Activated CD4-positive, alpha-beta T cell treated with anti-CD3 and anti-CD28 coated beads for 36 hours (primary cell): ENCODE measurements at regions of chr22 and their contacts with region 1.

Region 1: DNA sequence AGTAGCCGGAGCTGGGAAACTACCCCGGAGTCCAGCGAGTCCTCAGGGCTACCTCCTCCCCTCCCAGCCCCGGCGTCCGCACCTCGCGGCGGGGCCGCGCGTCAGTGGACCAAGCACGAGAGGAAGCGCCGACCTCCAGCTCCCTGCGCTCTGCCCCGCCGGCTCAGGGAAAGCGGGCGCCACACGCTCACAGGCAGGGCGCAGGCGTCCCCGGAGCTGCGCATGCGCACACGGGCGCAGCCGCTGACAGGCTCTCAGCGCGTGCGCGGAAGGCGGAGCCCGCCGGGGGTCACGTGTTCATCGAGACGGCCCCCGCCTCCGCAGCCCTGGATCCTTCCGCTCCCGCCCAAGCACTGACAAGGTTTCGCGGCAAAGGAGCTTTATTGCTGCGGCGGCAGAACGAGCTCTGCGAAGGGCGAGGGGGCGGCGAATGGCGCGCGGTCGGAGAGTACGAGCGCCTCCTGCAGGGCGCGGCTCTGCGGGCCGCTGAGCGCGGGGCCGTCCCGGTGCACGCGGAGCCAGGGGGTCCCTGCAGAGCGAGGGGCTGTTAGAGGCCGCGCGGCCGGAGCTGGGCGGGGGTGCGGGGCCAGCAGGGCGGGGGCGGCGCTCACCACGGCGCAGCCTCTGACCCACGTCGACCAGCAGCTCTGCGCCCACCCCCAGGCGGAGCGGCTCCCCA is at the start of gene SCO2:
- DNase-seq: peak; percentile 99
- ATAC-seq: peak; percentile 56
- H3K4me3 Mint-ChIP-seq: peak within 1 kb of the TSS; percentile 77
- H3K27ac Mint-ChIP-seq: peak within 1 kb of the TSS; percentile 87
- H3K4me1 Mint-ChIP-seq: peaks cover 34% of the 10 kb centered on the region
- H3K27me3 Mint-ChIP-seq: no peaks in the 10 kb centered on the region
- total RNA-seq, gene SCO2: 2.4 to 5.6 TPM

Region 2: GRCh38 chr22:50244420-50245213 is 280.9 kb before region 1 on chr22 and contains the start of gene TUBGCP6:
- CTCF ChIA-PET with region 1: interaction called, 7 read pairs
- POLR2A ChIA-PET with region 1: no interaction called
- intact Hi-C with region 1: loop called in 1 of 2 experiments (anchors 1 kb)
- DNase-seq: peak; percentile 96
- ATAC-seq: peak; percentile 80
- H3K4me3 Mint-ChIP-seq: peak within 1 kb of the TSS; percentile 94
- H3K27ac Mint-ChIP-seq: peak within 1 kb of the TSS; percentile 100
- H3K4me1 Mint-ChIP-seq: peaks cover 23% of the 10 kb centered on the region
- H3K27me3 Mint-ChIP-seq: no peaks in the 10 kb centered on the region
- total RNA-seq, gene TUBGCP6: 42.2 to 49.2 TPM

Region 3: GRCh38 chr22:50474668-50475492 is 50.6 kb before region 1 on chr22 and contains the start of gene SBF1:
- CTCF ChIA-PET with region 1: interaction called, 14 read pairs
- POLR2A ChIA-PET with region 1: interaction called, 6 read pairs
- intact Hi-C with region 1: loop called in 1 of 2 experiments (anchors 1 kb)
- DNase-seq: peak; percentile 95
- ATAC-seq: peak; percentile 78
- H3K4me3 Mint-ChIP-seq: peak within 1 kb of the TSS; percentile 89
- H3K27ac Mint-ChIP-seq: peak within 1 kb of the TSS; percentile 83
- H3K4me1 Mint-ChIP-seq: peaks cover 42% of the 10 kb centered on the region
- H3K27me3 Mint-ChIP-seq: peaks cover 2% of the 10 kb centered on the region
- total RNA-seq, gene SBF1: 97.6 TPM

Region 4: GRCh38 chr22:50490531-50491308 is 34.8 kb before region 1 on chr22:
- CTCF ChIA-PET with region 1: no interaction called
- POLR2A ChIA-PET with region 1: no interaction called
- intact Hi-C with region 1: no loop called
- DNase-seq: peak; percentile 42
- ATAC-seq: peak; percentile 38
- H3K4me3 Mint-ChIP-seq: no peak overlapping the region
- H3K27ac Mint-ChIP-seq: no peak overlapping the region
- H3K4me1 Mint-ChIP-seq: peaks cover 7% of the 10 kb centered on the region
- H3K27me3 Mint-ChIP-seq: no peaks in the 10 kb centered on the region

Region 5: GRCh38 chr22:50544078-50544745 is 18.7 kb after region 1 on chr22:
- CTCF ChIA-PET with region 1: interaction called, 72 read pairs
- POLR2A ChIA-PET with region 1: interaction called, 25 read pairs
- intact Hi-C with region 1: loop called in 1 of 2 experiments (anchors 1 kb)
- DNase-seq: peak; percentile 94
- ATAC-seq: peak; percentile 49
- H3K4me3 Mint-ChIP-seq: peak overlapping the region; percentile 35
- H3K27ac Mint-ChIP-seq: peak overlapping the region; percentile 78
- H3K4me1 Mint-ChIP-seq: peaks cover 61% of the 10 kb centered on the region
- H3K27me3 Mint-ChIP-seq: no peaks in the 10 kb centered on the region

Region 6: DNA sequence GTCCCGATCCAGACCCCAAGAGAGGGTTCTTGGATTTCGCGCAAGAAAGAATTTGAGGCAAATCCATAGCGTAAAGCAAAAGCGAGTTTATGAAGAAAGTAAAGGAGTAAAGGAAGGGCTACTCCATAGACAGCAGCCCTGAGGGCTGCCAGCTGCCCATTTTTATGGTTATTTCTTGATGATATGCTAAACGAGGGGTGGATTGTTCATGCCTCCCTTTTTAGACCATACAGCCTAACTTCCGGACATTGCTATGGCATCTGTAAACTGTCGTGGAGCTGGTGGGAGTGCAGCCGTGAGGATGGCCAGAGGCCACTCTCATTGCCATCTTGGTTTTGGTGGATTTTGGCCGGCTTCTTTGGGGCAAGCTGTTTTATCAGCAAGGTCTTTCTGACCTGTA is 127.7 kb after region 1 on chr22:
- CTCF ChIA-PET with region 1: no interaction called
- POLR2A ChIA-PET with region 1: no interaction called
- intact Hi-C with region 1: no loop called
- DNase-seq: no peak
- ATAC-seq: no peak
- H3K4me3 Mint-ChIP-seq: no peak overlapping the region
- H3K27ac Mint-ChIP-seq: no peak overlapping the region
- H3K4me1 Mint-ChIP-seq: no peaks in the 10 kb centered on the region
- H3K27me3 Mint-ChIP-seq: peaks cover 8% of the 10 kb centered on the region

Region 7: DNA sequence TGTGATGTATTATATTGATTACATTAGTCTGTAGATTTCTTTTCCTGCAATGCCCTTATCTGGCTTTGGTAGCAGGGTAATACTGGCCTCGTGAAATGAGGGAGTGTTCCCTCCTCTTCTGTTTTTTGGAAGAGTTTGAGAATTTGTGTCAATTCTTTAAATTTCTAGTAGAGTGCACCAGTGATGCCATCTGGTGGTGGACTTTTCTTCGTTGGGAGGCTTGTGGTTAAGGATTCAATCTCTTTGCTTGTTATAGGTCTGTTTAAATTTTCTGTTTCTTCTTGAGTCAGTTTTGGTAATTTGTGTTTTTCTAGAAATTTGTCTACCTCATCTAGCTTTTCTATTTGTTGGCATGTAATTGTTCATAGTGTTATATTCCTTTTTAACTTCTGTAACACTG is 166.0 kb after region 1 on chr22:
- CTCF ChIA-PET with region 1: no interaction called
- POLR2A ChIA-PET with region 1: no interaction called
- intact Hi-C with region 1: loop called in 1 of 2 experiments (anchors 1 kb)
- DNase-seq: peak; percentile 67
- ATAC-seq: peak; percentile 36
- H3K4me3 Mint-ChIP-seq: no peak overlapping the region
- H3K27ac Mint-ChIP-seq: no peak overlapping the region
- H3K4me1 Mint-ChIP-seq: peaks cover 5% of the 10 kb centered on the region
- H3K27me3 Mint-ChIP-seq: peaks cover 4% of the 10 kb centered on the region